ENCODE measurements at regions of chr14 and their contacts with region 1.

Region 1: GRCh38 chr14:105527661-105528581 is 1.5 kb downstream of the TMEM121 start:
- DNase-seq: peak; percentile 66 to 81 (median 78)
- H3K4me3 ChIP-seq: peak overlapping the region; percentile 13 to 80 (median 63)
- H3K27ac ChIP-seq: no peak overlapping the region
- H3K4me1 ChIP-seq: peaks cover 0 to 45% (median 31%) of the 10 kb centered on the region in 4 experiments
- H3K27me3 ChIP-seq: peaks cover 0 to 45% (median 19%) of the 10 kb centered on the region in 5 experiments

Region 2: GRCh38 chr14:105480952-105481801 is 46.7 kb before region 1 on chr14:
- CTCF ChIA-PET with region 1: interaction called, 12 read pairs
- POLR2A ChIA-PET with region 1: no interaction called
- DNase-seq: peak; percentile 89 to 93 (median 90)
- H3K4me3 ChIP-seq: peak overlapping the region; percentile 23 to 78 (median 53)
- H3K27ac ChIP-seq: peak overlapping the region; percentile 93 to 97
- H3K4me1 ChIP-seq: peaks cover 0 to 89% (median 57%) of the 10 kb centered on the region in 4 experiments
- H3K27me3 ChIP-seq: peaks cover 0 to 58% (median 20%) of the 10 kb centered on the region in 5 experiments

Region 3: DNA sequence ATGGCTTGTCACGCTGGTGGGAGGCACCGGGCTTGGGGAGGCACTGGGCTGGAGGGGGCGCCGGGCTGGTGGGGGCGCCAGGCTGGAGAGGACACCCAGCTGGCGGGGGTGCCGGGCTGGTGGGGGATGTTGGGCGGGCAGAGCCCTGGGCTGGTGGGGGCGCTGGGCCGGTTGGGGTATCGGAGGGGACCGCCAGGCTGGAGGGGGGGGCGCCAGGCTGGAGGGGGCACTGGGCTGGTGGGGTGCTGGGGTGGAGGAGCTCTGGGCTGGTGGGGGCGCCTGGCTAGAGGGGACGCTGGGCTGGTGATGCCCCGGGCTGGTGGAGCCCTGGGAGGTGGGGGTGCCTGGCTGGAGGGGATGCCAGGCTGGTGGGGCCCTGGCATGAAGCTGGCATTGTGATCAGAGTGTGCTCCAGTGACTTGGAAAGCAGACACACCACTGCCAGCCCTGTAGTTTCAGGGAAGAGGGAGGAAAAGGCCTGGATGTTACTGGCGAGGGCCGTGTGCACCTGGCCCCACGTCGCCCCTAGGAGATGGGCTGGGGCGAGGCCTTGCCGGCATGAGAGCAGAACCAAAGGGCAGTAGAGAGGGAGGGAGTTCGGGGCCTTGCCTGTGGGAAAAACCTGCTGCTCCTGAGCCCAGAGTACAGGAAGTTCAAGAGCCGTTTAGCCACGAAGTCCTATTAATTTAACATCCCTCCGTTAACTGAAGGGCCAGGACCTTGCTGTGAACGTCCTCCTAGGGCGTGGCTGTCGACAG is 23.8 kb before region 1 on chr14:
- CTCF ChIA-PET with region 1: interaction called, 10 read pairs
- POLR2A ChIA-PET with region 1: no interaction called
- DNase-seq: no peak
- H3K4me3 ChIP-seq: no peak overlapping the region
- H3K27ac ChIP-seq: no peak overlapping the region
- H3K4me1 ChIP-seq: peaks cover 0 to 11% (median 5%) of the 10 kb centered on the region in 4 experiments
- H3K27me3 ChIP-seq: peaks cover 0 to 22% (median 6%) of the 10 kb centered on the region in 5 experiments